ENCODE measurements at regions of chr9 and their contacts with region 1.

Region 1: GRCh38 chr9:70602321-70603019 is 188.0 kb upstream of the KLF9 start:
- DNase-seq: peak in 7 of 9 donors; percentile 27 to 68 (median 52)
- ATAC-seq: peak; percentile 84
- H3K4me3 ChIP-seq: no peak overlapping the region
- H3K4me3 Mint-ChIP-seq: no peak overlapping the region
- H3K27ac ChIP-seq: no peak overlapping the region
- H3K27ac Mint-ChIP-seq: peak overlapping the region in 3 of 9 donors; percentile 32 to 79 (median 55)
- H3K4me1 ChIP-seq: no peaks in the 10 kb centered on the region
- H3K4me1 Mint-ChIP-seq: peaks cover 0 to 19% (median 5%) of the 10 kb centered on the region in 7 donors
- H3K27me3 ChIP-seq: no peaks in the 10 kb centered on the region
- H3K27me3 Mint-ChIP-seq: no peaks in the 10 kb centered on the region

Region 2: DNA sequence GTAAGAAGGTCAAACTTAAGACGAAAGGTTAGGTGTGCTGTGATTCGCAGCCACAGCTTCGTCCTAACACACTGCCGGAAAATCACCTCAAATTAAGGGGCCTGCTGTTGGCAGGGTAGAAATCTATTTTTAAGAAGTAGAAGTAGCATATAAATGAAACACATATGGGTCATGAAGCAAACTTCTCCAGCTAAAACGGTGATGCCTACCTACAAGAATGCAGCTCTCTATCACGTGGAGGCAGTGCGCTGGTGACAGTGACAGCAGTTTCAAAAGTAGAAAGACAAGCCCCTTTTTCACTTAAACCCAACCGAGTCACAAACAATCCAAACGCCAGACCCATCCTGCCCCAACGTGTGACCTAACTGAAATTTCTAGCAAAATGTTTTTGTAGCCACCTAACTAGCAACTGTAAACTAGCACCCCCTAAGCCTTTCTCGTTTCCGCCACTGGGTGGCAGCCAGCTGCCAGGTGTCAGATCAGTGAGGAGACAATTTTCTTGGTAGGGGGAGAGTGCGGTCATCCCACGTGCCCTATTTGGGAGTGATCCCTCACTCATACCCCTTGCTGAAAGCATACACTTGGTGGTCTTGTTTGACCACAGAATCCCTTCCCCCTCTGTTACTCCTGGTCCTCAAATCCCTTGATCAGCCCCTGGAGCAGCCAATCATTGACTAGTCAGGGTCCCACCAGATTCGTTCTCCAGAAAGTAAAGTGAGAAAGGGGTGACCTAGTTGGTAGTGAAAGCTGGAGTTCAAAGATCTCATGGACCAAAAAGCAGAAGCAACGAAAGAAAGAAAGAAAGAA is 630.6 kb before region 1 on chr9:
- CTCF ChIA-PET with region 1: interaction called, 7 read pairs
- POLR2A ChIA-PET with region 1: no interaction called
- intact Hi-C with region 1: loop called in 1 of 2 experiments (anchors 1 kb)
- DNase-seq: peak in 7 of 9 donors; percentile 18 to 37 (median 27)
- ATAC-seq: peak; percentile 52
- H3K4me3 ChIP-seq: no peak overlapping the region
- H3K4me3 Mint-ChIP-seq: no peak overlapping the region
- H3K27ac ChIP-seq: no peak overlapping the region
- H3K27ac Mint-ChIP-seq: no peak overlapping the region
- H3K4me1 ChIP-seq: no peaks in the 10 kb centered on the region
- H3K4me1 Mint-ChIP-seq: peaks cover 0 to 4% (median 0%) of the 10 kb centered on the region in 7 donors
- H3K27me3 ChIP-seq: no peaks in the 10 kb centered on the region
- H3K27me3 Mint-ChIP-seq: peaks cover 5 to 19% (median 15%) of the 10 kb centered on the region in 5 donors

Region 3: GRCh38 chr9:70340572-70340971 is 261.9 kb before region 1 on chr9:
- CTCF ChIA-PET with region 1: interaction called, 33 read pairs
- POLR2A ChIA-PET with region 1: no interaction called
- intact Hi-C with region 1: loop called (anchors 1 kb)
- DNase-seq: peak in 5 of 9 donors; percentile 8 to 36 (median 24)
- ATAC-seq: no peak
- H3K4me3 ChIP-seq: no peak overlapping the region
- H3K4me3 Mint-ChIP-seq: no peak overlapping the region
- H3K27ac ChIP-seq: no peak overlapping the region
- H3K27ac Mint-ChIP-seq: no peak overlapping the region
- H3K4me1 ChIP-seq: no peaks in the 10 kb centered on the region
- H3K4me1 Mint-ChIP-seq: peaks cover 0 to 12% (median 4%) of the 10 kb centered on the region in 7 donors
- H3K27me3 ChIP-seq: no peaks in the 10 kb centered on the region
- H3K27me3 Mint-ChIP-seq: no peaks in the 10 kb centered on the region

Region 4: GRCh38 chr9:70352802-70353201 is 249.7 kb before region 1 on chr9:
- CTCF ChIA-PET with region 1: interaction called, 20 read pairs
- POLR2A ChIA-PET with region 1: no interaction called
- intact Hi-C with region 1: loop called (anchors 1 kb)
- DNase-seq: peak in 6 of 9 donors; percentile 9 to 46 (median 30)
- ATAC-seq: no peak
- H3K4me3 ChIP-seq: no peak overlapping the region
- H3K4me3 Mint-ChIP-seq: no peak overlapping the region
- H3K27ac ChIP-seq: no peak overlapping the region
- H3K27ac Mint-ChIP-seq: peak overlapping the region in 2 of 9 donors; percentile 9 to 16
- H3K4me1 ChIP-seq: no peaks in the 10 kb centered on the region
- H3K4me1 Mint-ChIP-seq: peaks cover 0 to 9% (median 0%) of the 10 kb centered on the region in 7 donors
- H3K27me3 ChIP-seq: no peaks in the 10 kb centered on the region
- H3K27me3 Mint-ChIP-seq: no peaks in the 10 kb centered on the region

Region 5: GRCh38 chr9:70419546-70420266 is 182.8 kb before region 1 on chr9:
- CTCF ChIA-PET with region 1: interaction called, 17 read pairs
- POLR2A ChIA-PET with region 1: interaction called, 10 read pairs
- intact Hi-C with region 1: loop called (anchors 1 kb)
- DNase-seq: peak; percentile 69 to 92 (median 83)
- ATAC-seq: peak; percentile 69
- H3K4me3 ChIP-seq: peak overlapping the region; percentile 69
- H3K4me3 Mint-ChIP-seq: peak overlapping the region; percentile 87 to 99 (median 95)
- H3K27ac ChIP-seq: peak overlapping the region; percentile 92
- H3K27ac Mint-ChIP-seq: peak overlapping the region; percentile 75 to 100 (median 99)
- H3K4me1 ChIP-seq: peaks cover 38 to 43% of the 10 kb centered on the region in 2 donors
- H3K4me1 Mint-ChIP-seq: peaks cover 22 to 66% (median 42%) of the 10 kb centered on the region in 7 donors
- H3K27me3 ChIP-seq: no peaks in the 10 kb centered on the region
- H3K27me3 Mint-ChIP-seq: peaks cover 0 to 2% (median 0%) of the 10 kb centered on the region in 5 donors

Region 6: DNA sequence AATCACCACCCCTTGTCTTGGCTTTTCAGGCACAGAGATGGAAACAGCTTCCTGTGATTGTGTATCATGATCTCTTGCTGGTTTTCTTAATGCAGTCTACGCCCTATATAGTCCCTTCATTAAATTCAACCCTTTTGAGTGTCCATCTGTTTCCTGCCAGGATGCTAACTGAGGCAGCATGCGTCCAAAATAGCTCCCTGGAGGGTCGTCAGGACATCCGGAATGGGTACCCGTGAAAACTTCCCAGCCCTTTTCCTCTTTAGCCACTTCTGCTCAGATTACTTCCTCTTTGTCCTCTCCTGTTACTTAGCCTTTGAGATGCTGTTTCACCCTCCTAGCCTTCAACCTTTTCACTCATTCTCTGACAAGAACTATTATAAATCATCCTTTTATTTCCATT is 108.2 kb before region 1 on chr9:
- CTCF ChIA-PET with region 1: interaction called, 8 read pairs
- POLR2A ChIA-PET with region 1: no interaction called
- intact Hi-C with region 1: loop called in 1 of 2 experiments (anchors 5 kb)
- DNase-seq: no peak
- ATAC-seq: no peak
- H3K4me3 ChIP-seq: no peak overlapping the region
- H3K4me3 Mint-ChIP-seq: peak overlapping the region in 1 of 10 donors; percentile 5
- H3K27ac ChIP-seq: no peak overlapping the region
- H3K27ac Mint-ChIP-seq: peak overlapping the region in 1 of 9 donors; percentile 62
- H3K4me1 ChIP-seq: peaks cover 0 to 4% of the 10 kb centered on the region in 2 donors
- H3K4me1 Mint-ChIP-seq: peaks cover 13 to 42% (median 31%) of the 10 kb centered on the region in 7 donors
- H3K27me3 ChIP-seq: no peaks in the 10 kb centered on the region
- H3K27me3 Mint-ChIP-seq: peaks cover 0 to 7% (median 0%) of the 10 kb centered on the region in 5 donors

Region 7: GRCh38 chr9:72140582-72140981 is 1538.1 kb after region 1 on chr9:
- CTCF ChIA-PET with region 1: no interaction called
- POLR2A ChIA-PET with region 1: no interaction called
- intact Hi-C with region 1: no loop called
- DNase-seq: no peak
- ATAC-seq: no peak
- H3K4me3 ChIP-seq: no peak overlapping the region
- H3K4me3 Mint-ChIP-seq: no peak overlapping the region
- H3K27ac ChIP-seq: no peak overlapping the region
- H3K27ac Mint-ChIP-seq: no peak overlapping the region
- H3K4me1 ChIP-seq: no peaks in the 10 kb centered on the region
- H3K4me1 Mint-ChIP-seq: no peaks in the 10 kb centered on the region
- H3K27me3 ChIP-seq: no peaks in the 10 kb centered on the region
- H3K27me3 Mint-ChIP-seq: peaks cover 10 to 30% (median 17%) of the 10 kb centered on the region in 5 donors

Measured in naive thymus-derived CD4-positive, alpha-beta T cell (primary cell).